ENCODE measurements at regions of chr17 and their contacts with region 1.

Region 1: GRCh38 chr17:47978324-47978723 is 7.4 kb downstream of the CDK5RAP3 start:
- DNase-seq: peak; percentile 64 to 77 (median 73)
- ATAC-seq: peak; percentile 58 to 66
- H3K4me3 ChIP-seq: no peak overlapping the region
- H3K27ac ChIP-seq: no peak overlapping the region
- H3K4me1 ChIP-seq: no peaks in the 10 kb centered on the region
- H3K27me3 ChIP-seq: no peaks in the 10 kb centered on the region

Region 2: GRCh38 chr17:47850692-47851573 is 127.4 kb before region 1 on chr17 and contains the start of gene SP6:
- intact Hi-C with region 1: no loop called
- DNase-seq: peak; percentile 71 to 77 (median 77)
- ATAC-seq: peak; percentile 79 to 82
- H3K4me3 ChIP-seq: peak within 1 kb of the TSS; percentile 33
- H3K27ac ChIP-seq: no peak within 1 kb of the TSS
- H3K4me1 ChIP-seq: peaks cover 2% of the 10 kb centered on the region
- H3K27me3 ChIP-seq: no peaks in the 10 kb centered on the region
- total RNA-seq, gene SP6: 0.29 to 3.6 (median 0.41) TPM

Region 3: DNA sequence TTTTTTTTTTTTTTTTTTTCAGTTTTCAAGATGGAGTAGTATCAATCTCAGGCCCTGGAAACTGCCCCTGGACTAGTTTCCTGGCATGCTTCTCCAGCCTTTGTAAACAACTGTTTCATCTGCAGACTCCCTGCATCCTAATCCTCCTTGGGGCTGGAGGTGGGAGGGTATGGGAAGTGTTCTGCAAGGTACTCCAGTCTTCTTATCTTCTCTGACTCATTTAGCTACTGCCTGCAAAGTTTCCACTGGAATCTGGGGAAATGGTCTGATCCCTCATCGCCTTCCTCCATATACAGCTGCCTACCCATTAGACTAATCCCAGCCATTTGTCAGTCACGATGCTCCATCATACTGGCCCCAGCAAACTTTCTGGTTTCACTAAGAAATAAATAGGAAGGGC is 37.8 kb after region 1 on chr17:
- intact Hi-C with region 1: loop called in 3 of 4 experiments (anchors 2 kb)
- DNase-seq: no peak
- ATAC-seq: no peak
- H3K4me3 ChIP-seq: no peak overlapping the region
- H3K27ac ChIP-seq: no peak overlapping the region
- H3K4me1 ChIP-seq: no peaks in the 10 kb centered on the region
- H3K27me3 ChIP-seq: no peaks in the 10 kb centered on the region

Measured in right cardiac atrium (tissue), 5 donors.